ENCODE measurements at regions of chr9 and their contacts with region 1.

Region 1: GRCh38 chr9:121059998-121060636 is 10.0 kb upstream of the C5 start:
- DNase-seq: no peak
- ATAC-seq: peak; percentile 55
- H3K4me3 Mint-ChIP-seq: no peak overlapping the region
- H3K27ac Mint-ChIP-seq: no peak overlapping the region
- H3K4me1 Mint-ChIP-seq: peaks cover 10% of the 10 kb centered on the region
- H3K27me3 Mint-ChIP-seq: peaks cover 4% of the 10 kb centered on the region

Region 2: DNA sequence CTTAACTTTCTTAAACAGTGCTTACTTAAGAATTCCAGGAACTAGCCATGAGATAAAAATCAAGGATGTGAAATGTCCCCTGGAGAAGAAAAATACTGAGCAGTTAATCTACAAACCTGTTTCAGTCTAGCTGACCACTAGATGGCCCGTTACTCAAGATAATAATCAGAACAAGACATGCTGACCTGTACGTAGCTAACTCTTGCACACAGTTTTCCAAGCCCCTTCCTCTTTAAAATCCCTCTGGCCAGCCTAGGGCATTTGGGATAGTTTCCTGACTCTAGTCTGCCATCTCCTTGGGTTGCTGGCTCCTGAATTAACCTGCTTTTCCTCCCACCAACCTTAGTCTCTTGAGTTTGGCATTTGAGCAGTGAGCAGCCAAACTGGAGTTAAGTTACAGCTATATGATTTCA is 74.3 kb before region 1 on chr9:
- CTCF ChIA-PET with region 1: interaction called, 31 read pairs
- DNase-seq: no peak
- ATAC-seq: no peak
- H3K4me3 Mint-ChIP-seq: no peak overlapping the region
- H3K27ac Mint-ChIP-seq: no peak overlapping the region
- H3K4me1 Mint-ChIP-seq: peaks cover 2% of the 10 kb centered on the region
- H3K27me3 Mint-ChIP-seq: peaks cover 7% of the 10 kb centered on the region

Region 3: GRCh38 chr9:121048618-121049017 is 11.5 kb before region 1 on chr9:
- CTCF ChIA-PET with region 1: interaction called, 12 read pairs
- DNase-seq: no peak
- ATAC-seq: no peak
- H3K4me3 Mint-ChIP-seq: no peak overlapping the region
- H3K27ac Mint-ChIP-seq: no peak overlapping the region
- H3K4me1 Mint-ChIP-seq: no peaks in the 10 kb centered on the region
- H3K27me3 Mint-ChIP-seq: no peaks in the 10 kb centered on the region

Region 4: DNA sequence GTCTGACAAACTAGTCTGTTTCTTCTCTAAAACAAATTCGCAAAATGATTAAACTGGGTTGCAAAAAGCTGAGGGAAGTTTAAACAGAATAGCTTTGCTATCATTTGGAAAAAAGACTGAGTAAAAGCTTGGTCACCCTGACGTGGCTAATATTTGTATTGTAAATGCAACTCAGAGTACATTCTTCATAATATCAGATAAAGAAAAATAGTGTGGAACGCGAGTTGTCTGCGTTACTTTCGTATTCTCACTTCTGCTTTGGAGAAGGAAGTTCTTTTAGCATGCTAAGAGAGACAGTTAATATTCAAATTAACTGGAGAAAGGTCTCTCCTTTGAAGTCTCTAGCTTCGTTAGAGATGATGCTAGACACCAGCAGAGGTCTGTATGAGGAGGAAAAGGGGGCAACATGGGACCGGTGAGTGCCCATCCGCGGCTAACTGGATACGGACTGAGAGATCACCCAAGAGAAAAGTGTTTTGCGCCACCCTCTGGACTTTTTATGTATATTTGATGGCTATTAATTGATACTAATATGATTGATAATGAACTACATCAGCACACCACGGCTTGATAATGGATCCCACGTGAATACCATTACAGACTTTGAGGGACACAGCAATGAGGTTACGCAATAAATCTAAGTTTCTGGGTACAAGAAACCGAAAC is 11.8 kb after region 1 on chr9:
- CTCF ChIA-PET with region 1: interaction called, 27 read pairs
- DNase-seq: peak; percentile 62
- ATAC-seq: no peak
- H3K4me3 Mint-ChIP-seq: peak overlapping the region; percentile 82
- H3K27ac Mint-ChIP-seq: peak overlapping the region; percentile 95
- H3K4me1 Mint-ChIP-seq: peaks cover 60% of the 10 kb centered on the region
- H3K27me3 Mint-ChIP-seq: no peaks in the 10 kb centered on the region

Measured in activated CD8-positive, alpha-beta memory T cell treated with anti-CD3 and anti-CD28 coated beads, Interleukin-2, amount 10 ng/mL, durations not matched to agents 7 days and 5 days (primary cell).